ENCODE measurements at regions of chr2 and their contacts with region 1.

Region 1: GRCh38 chr2:207625018-207625907 is at the start of gene METTL21A:
- DNase-seq: peak; percentile 94
- H3K4me3 ChIP-seq: peak within 1 kb of the TSS; percentile 83
- H3K27ac ChIP-seq: peak within 1 kb of the TSS; percentile 99
- H3K4me1 ChIP-seq: peaks cover 64% of the 10 kb centered on the region
- CTCF ChIP-seq: peak; percentile 54
- total RNA-seq, gene METTL21A: 55.2 and 61.1 TPM in 2 replicates

Region 2: GRCh38 chr2:207311316-207312005 is 313.8 kb before region 1 on chr2:
- CTCF ChIA-PET with region 1: no interaction called
- POLR2A ChIA-PET with region 1: no interaction called
- intact Hi-C with region 1: no loop called
- DNase-seq: no peak
- H3K4me3 ChIP-seq: no peak overlapping the region
- H3K27ac ChIP-seq: no peak overlapping the region
- H3K4me1 ChIP-seq: no peaks in the 10 kb centered on the region
- CTCF ChIP-seq: no peak

Region 3: GRCh38 chr2:207529330-207530159 is 95.7 kb before region 1 on chr2 and contains the start of gene CREB1:
- CTCF ChIA-PET with region 1: no interaction called
- POLR2A ChIA-PET with region 1: interaction called, 13 read pairs
- intact Hi-C with region 1: loop called (anchors 1 kb)
- DNase-seq: peak; percentile 96
- H3K4me3 ChIP-seq: peak within 1 kb of the TSS; percentile 97
- H3K27ac ChIP-seq: peak within 1 kb of the TSS; percentile 94
- H3K4me1 ChIP-seq: peaks cover 50% of the 10 kb centered on the region
- CTCF ChIP-seq: peak; percentile 35; the same call in 1 of the 2 replicates
- total RNA-seq, gene CREB1: 40.3 and 54.3 TPM in 2 replicates

Region 4: DNA sequence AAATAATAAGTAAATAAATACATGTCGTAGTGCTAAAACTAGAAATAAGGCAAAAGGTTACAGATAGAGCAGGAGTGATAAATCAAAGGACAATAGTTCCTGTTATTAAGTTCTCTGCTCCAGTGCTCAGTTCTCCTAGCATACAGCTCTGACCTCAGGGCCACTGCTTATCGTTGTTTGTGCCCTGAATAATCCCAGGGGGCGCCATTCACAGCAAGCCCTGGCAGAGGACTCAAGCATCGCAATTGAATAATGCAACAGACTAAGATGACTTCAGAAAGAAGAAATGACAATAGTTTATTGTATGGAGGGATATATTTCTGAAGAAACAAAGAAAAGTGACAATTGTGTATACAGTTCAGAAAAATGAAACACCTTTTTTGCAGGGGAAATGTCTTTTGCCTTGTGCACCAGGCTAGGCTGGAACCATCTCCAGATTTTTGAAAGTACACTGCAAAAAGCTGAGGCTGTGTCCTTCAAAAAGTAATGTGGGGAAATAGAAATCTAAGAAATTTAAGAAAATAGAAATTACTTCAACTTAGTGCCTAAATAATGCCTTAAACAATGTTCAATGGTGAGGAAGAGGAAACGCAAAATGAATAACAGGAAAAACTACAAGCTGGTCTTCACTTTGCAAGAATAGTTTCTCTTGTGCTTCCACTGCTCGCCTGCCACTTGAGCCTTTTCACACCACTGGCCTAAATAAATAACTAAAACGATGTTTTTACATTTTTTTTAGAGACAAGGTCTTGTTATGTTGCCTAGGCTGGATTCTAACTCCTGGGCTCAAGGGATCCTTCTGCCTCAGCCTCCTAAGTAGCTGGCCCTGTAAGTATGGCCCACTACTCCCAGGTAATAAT is 67.2 kb after region 1 on chr2:
- CTCF ChIA-PET with region 1: interaction called, 3 read pairs
- POLR2A ChIA-PET with region 1: interaction called, 10 read pairs
- intact Hi-C with region 1: no loop called
- DNase-seq: peak; percentile 61
- H3K4me3 ChIP-seq: no peak overlapping the region
- H3K27ac ChIP-seq: no peak overlapping the region
- H3K4me1 ChIP-seq: no peaks in the 10 kb centered on the region
- CTCF ChIP-seq: peak; percentile 90

Region 5: GRCh38 chr2:207734264-207734635 is 109.0 kb after region 1 on chr2:
- CTCF ChIA-PET with region 1: no interaction called
- POLR2A ChIA-PET with region 1: interaction called, 3 read pairs
- intact Hi-C with region 1: loop called (anchors 5 kb)
- DNase-seq: peak; percentile 23
- H3K4me3 ChIP-seq: no peak overlapping the region
- H3K27ac ChIP-seq: no peak overlapping the region
- H3K4me1 ChIP-seq: no peaks in the 10 kb centered on the region
- CTCF ChIP-seq: peak; percentile 64; the same call in 1 of the 2 replicates

Region 6: DNA sequence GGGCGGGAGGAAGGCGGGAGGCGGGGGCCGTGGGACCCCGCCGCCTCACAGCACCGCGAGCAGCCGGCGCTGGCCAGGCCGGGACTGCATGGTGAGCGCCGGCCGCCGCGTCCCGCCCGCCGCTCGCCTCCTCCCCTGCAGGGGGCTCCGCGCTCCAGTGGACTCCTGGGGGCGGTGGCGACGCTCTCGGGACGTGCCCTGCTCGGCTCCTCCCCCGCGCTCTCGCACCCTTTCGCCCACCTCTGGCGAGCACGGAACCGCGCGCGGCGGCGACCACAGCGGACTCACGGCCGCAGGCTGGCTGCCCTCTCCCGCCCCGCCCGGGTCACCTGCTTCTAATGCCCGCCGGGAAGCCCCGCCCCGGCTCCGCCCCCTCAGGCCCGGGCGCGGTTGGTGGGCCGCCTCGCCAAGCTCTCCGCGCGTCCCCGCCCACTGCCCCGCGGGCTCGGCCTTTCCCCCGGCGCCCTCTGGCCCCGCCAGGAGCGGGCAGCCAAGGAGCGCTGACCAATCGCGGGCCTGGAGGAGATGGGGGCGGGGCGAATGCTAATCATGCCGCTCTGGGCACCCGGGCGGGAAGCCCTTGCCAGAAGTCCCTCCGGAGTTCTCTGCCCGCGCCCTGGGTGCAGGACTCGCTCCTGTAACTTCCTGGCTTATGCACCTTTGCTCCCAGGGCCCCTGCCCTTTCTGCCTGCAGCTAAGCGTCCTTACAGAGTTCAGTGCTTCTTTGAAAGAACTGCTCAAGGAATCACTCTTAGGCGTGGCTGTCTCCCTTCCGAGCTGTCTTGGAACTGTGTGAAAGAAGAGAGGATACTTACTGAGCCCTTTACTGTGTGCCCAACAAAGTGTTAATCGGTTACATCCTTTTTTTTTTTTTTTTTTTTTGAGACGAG is 144.6 kb after region 1 on chr2 and contains the start of gene FZD5:
- CTCF ChIA-PET with region 1: no interaction called
- POLR2A ChIA-PET with region 1: interaction called, 3 read pairs
- intact Hi-C with region 1: loop called (anchors 1 kb)
- DNase-seq: peak; percentile 94
- H3K4me3 ChIP-seq: peak within 1 kb of the TSS; percentile 66
- H3K27ac ChIP-seq: no peak within 1 kb of the TSS
- H3K4me1 ChIP-seq: peaks cover 11% of the 10 kb centered on the region
- CTCF ChIP-seq: peak; percentile 36; the same call in 1 of the 2 replicates
- total RNA-seq, gene FZD5: 1.1 and 1.2 TPM in 2 replicates

Region 7: DNA sequence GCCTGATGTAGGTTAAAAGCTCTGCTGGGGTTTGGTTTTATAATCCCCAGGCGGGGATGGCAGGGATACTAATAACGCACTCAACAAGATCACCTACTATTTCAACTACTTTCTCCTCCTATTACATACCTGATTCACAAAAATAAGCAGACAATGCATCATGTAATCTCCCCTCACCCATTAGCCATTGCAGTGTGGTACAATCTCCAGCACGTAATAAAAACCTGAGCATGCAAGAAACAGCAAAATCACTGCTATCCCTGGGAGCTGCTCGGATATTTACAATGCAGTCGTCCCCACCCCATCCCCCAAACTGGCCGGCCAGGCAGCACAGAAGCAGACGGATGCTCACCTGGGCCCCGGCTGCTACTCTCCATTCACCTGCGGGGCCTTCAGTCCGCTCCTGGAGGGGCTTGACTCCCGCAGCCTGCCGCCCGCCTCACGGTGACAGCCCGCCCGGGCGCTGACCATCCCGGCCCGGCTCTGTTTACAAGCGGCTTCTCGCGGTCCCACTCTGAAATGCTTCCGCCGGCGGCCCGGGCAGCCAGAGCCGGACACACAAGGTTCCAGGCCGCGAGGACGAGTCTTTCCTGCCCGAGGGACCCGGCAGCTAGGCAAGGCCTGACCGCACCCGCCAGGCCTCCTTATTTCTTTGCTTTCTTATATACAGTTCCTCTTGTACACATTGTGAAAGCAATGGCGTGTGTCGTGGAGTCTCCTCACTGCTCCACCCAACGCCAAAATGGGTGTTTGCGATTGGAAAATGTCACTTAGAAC is 400.0 kb after region 1 on chr2 and contains the start of gene PLEKHM3:
- CTCF ChIA-PET with region 1: interaction called, 3 read pairs
- POLR2A ChIA-PET with region 1: interaction called, 5 read pairs
- intact Hi-C with region 1: loop called (anchors 5 kb)
- DNase-seq: peak; percentile 84
- H3K4me3 ChIP-seq: peak within 1 kb of the TSS; percentile 89
- H3K27ac ChIP-seq: peak within 1 kb of the TSS; percentile 27
- H3K4me1 ChIP-seq: peaks cover 7% of the 10 kb centered on the region
- CTCF ChIP-seq: no peak
- total RNA-seq, gene PLEKHM3: 4.0 and 6.3 TPM in 2 replicates

Region 8: GRCh38 chr2:208265801-208266552 is 640.7 kb after region 1 on chr2 and contains the start of gene PIKFYVE:
- CTCF ChIA-PET with region 1: no interaction called
- POLR2A ChIA-PET with region 1: interaction called, 5 read pairs
- intact Hi-C with region 1: loop called (anchors 1 kb)
- DNase-seq: peak; percentile 98
- H3K4me3 ChIP-seq: peak within 1 kb of the TSS; percentile 74
- H3K27ac ChIP-seq: peak within 1 kb of the TSS; percentile 93
- H3K4me1 ChIP-seq: peaks cover 37% of the 10 kb centered on the region
- CTCF ChIP-seq: no peak
- total RNA-seq, gene PIKFYVE: 29.2 and 29.7 TPM in 2 replicates